ENCODE measurements at regions of chr9 and their contacts with region 1.

Region 1: DNA sequence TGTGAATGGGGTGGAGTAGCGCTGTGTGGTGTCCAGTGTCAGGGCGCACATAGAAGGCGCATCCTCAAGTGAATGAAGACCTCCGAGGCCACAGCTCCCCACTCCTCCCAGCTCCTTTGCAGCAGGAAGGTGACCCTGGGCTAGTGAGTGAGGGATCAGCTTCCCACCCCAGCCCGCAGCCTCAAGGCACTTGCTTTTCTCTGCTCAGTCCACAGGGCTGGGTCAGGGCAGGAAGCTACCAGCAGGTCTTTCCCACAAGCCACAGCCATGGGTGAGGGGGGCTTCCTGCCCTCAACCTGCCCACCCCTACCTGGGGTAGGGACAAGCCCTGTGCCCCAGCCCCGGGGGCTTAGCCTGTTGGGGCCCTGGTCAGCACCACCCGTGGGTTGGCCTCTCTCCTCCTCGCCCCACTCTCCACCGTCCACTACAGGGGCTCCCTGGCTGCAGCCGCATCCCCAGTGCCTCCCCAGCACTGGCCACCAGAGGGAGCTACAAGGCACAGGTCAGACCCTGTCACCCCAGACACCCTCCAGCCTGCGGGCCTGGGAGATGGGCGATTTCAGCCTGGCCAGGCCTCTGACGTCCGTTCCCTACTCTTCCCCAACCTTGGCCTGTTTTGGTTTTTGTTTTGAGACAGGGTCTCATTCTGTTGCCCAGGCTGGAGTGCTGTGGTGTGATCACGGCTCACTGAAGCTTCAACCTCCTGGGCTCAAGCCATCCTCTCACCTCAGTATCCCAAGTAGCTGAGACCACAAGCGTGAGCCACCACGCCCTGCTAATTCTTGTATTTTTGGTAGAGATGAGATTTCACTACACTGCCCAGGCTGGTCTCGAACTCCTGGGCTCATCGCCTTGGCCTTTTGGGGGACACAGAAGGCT is 1.3 kb upstream of the ABCA2 start:
- DNase-seq: peak; percentile 58 to 74 (median 64)
- H3K4me3 ChIP-seq: peak overlapping the region; percentile 65 to 75
- H3K4me3 Mint-ChIP-seq: peak overlapping the region; percentile 87 to 96 (median 90)
- H3K27ac ChIP-seq: peak overlapping the region; percentile 68
- H3K27ac Mint-ChIP-seq: peak overlapping the region; percentile 70 to 92 (median 85)
- H3K4me1 ChIP-seq: peaks cover 80% of the 10 kb centered on the region
- H3K4me1 Mint-ChIP-seq: peaks cover 20 to 58% (median 39%) of the 10 kb centered on the region in 4 donors
- H3K27me3 ChIP-seq: no peaks in the 10 kb centered on the region
- H3K27me3 Mint-ChIP-seq: no peaks in the 10 kb centered on the region

Region 2: DNA sequence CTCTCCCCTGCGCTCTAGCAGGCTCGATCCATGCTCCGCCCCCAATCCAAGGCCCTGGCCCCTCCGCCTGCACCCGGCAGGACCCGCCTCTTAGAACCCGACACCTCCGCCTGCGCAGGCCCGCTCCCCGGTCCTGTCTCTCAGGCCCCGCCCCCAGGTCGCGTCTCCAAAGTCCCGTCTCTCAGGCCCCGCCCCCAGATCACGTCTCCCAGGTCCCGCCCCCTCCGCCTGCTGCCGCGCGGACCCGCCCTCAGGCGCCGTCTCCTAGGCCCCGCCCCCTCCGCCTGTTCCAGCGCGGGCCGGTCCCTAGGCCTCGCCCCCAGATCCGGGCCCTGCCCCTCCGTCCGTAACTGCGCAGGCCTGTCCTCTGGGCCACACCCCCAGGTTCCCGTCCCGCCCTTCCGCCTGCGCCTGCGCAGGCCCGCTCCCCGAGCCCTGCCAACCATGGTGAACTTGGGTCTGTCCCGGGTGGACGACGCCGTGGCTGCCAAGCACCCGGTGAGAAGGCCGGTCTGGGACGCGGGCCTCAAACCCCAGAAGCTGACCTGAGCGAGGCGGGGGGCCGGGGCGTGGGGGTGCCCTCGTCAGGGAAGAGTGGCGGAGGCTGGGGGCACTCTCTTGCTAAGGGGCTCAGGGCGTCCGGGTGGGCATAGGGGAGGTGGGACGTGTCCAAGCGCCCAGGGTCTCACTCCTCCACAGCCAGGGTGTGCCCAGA is 238.2 kb before region 1 on chr9 and contains the start of gene TMEM141:
- CTCF ChIA-PET with region 1: interaction called, 64 read pairs
- POLR2A ChIA-PET with region 1: interaction called, 13 read pairs
- intact Hi-C with region 1: no loop called
- DNase-seq: peak; percentile 99 to 100 (median 99)
- H3K4me3 ChIP-seq: peak within 1 kb of the TSS; percentile 61 to 86
- H3K4me3 Mint-ChIP-seq: peak within 1 kb of the TSS; percentile 81 to 88 (median 85)
- H3K27ac ChIP-seq: peak within 1 kb of the TSS; percentile 93
- H3K27ac Mint-ChIP-seq: peak within 1 kb of the TSS; percentile 91 to 98 (median 95)
- H3K4me1 ChIP-seq: peaks cover 31% of the 10 kb centered on the region
- H3K4me1 Mint-ChIP-seq: peaks cover 8 to 42% (median 24%) of the 10 kb centered on the region in 4 donors
- H3K27me3 ChIP-seq: no peaks in the 10 kb centered on the region
- H3K27me3 Mint-ChIP-seq: no peaks in the 10 kb centered on the region
- total RNA-seq, gene TMEM141: 51.1 to 53.4 TPM

Region 3: DNA sequence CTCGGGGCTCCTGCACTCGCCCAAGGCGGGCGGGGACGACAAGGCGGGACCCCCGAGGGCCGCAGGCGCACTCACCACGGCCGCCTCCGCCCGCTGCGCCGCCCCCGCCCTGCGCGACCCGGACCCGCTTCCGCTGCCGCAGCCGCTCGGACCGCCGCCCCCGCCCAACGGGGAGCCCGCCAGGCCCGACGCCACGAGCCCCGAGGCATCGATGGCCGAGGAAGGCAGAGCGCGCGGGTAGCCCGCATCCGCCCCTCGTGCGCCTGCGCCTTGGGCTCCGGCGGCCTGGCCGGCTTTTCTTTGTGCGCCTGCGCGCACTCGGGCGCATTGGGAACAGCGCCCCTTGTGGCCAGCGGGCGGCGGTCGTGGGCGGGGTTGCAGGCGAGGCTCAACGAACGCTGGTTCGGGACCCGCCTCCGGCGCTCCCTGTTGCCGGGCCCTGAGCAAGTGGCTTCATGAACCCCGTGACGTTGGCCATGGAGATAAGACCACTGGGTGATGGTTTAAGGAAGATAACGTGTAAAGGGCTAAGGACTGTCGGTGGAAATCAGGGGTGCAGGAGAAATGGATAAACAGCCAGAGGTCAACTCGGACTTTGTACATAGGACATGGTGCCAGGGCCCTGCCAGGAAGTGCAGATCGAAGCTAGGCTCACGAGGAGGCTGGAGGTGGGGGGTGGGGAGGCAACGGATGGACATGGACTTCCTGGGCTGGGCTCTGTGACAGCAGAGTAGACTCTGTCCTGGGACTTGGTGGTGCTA is 84.6 kb before region 1 on chr9 and contains the starts of genes C8G and FBXW5:
- CTCF ChIA-PET with region 1: interaction called, 84 read pairs
- POLR2A ChIA-PET with region 1: interaction called, 25 read pairs
- intact Hi-C with region 1: loop called (anchors 1 kb)
- DNase-seq: peak; percentile 89 to 97 (median 96)
- H3K4me3 ChIP-seq: peak within 1 kb of the TSS in 1 of 2 donors; percentile 70
- H3K4me3 Mint-ChIP-seq: peak within 1 kb of the TSS; percentile 75 to 88 (median 85)
- H3K27ac ChIP-seq: peak within 1 kb of the TSS; percentile 59
- H3K27ac Mint-ChIP-seq: peak within 1 kb of the TSS; percentile 66 to 90 (median 81)
- H3K4me1 ChIP-seq: peaks cover 23% of the 10 kb centered on the region
- H3K4me1 Mint-ChIP-seq: peaks cover 3 to 17% (median 9%) of the 10 kb centered on the region in 4 donors
- H3K27me3 ChIP-seq: no peaks in the 10 kb centered on the region
- H3K27me3 Mint-ChIP-seq: no peaks in the 10 kb centered on the region
- total RNA-seq, gene C8G: 2.2 TPM
- total RNA-seq, gene FBXW5: 122 to 123 TPM

Region 4: DNA sequence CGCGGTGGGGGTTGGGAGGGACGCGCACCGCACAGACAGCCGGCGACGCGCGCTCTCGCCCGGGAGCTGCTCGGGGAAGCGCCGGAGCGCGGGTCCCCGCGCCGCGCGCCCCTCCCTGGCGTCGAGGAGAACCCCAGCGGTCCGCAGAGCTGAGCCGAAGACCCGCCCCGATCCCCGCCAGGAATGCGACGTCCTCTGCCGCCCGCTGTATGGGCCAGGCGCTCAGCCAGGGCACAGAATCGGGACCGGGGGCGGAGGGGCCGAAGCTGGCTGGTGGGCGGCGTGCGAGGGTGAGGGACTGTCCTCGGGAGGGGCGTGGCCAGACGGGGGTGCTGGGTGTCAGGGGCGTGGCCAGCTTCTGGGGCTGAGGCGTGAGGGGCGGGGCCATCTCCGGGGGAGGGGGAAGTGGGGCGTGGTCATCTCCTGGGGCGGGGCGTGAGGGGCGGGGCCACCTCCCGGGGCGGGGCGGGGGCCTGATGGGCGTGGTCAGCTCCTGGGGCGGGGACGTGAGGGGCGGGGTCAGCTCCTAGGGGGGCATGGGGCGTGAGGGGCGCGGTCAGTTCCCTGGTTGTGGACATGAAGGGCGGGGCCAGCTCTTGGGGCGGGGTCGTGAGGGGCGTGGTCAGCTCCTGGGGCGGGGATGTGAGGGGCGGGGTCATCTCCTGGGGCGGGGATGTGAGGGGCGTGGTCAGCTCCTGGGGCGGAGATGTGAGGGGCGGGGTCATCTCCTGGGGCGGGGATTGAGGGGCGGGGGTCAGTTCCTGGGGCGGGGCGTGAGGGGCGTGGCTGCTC is 51.0 kb before region 1 on chr9:
- CTCF ChIA-PET with region 1: interaction called, 27 read pairs
- POLR2A ChIA-PET with region 1: interaction called, 7 read pairs
- intact Hi-C with region 1: loop called (anchors 10 kb)
- DNase-seq: peak; percentile 66 to 81 (median 69)
- H3K4me3 ChIP-seq: peak overlapping the region in 1 of 2 donors; percentile 9
- H3K4me3 Mint-ChIP-seq: peak overlapping the region in 5 of 8 donors; percentile 24 to 61 (median 47)
- H3K27ac ChIP-seq: peak overlapping the region; percentile 2
- H3K27ac Mint-ChIP-seq: no peak overlapping the region
- H3K4me1 ChIP-seq: peaks cover 41% of the 10 kb centered on the region
- H3K4me1 Mint-ChIP-seq: peaks cover 11 to 32% (median 23%) of the 10 kb centered on the region in 4 donors
- H3K27me3 ChIP-seq: no peaks in the 10 kb centered on the region
- H3K27me3 Mint-ChIP-seq: no peaks in the 10 kb centered on the region

Region 5: GRCh38 chr9:137046098-137046787 is 16.9 kb after region 1 on chr9 and contains the start of gene NPDC1:
- CTCF ChIA-PET with region 1: interaction called, 32 read pairs
- POLR2A ChIA-PET with region 1: interaction called, 10 read pairs
- intact Hi-C with region 1: no loop called
- DNase-seq: peak; percentile 72 to 79 (median 77)
- H3K4me3 ChIP-seq: peak within 1 kb of the TSS in 1 of 2 donors; percentile 72
- H3K4me3 Mint-ChIP-seq: peak within 1 kb of the TSS; percentile 72 to 88 (median 82)
- H3K27ac ChIP-seq: no peak within 1 kb of the TSS
- H3K27ac Mint-ChIP-seq: peak within 1 kb of the TSS in 3 of 7 donors; percentile 52 to 84 (median 53)
- H3K4me1 ChIP-seq: peaks cover 37% of the 10 kb centered on the region
- H3K4me1 Mint-ChIP-seq: peaks cover 3 to 22% (median 9%) of the 10 kb centered on the region in 4 donors
- H3K27me3 ChIP-seq: peaks cover 32% of the 10 kb centered on the region
- H3K27me3 Mint-ChIP-seq: peaks cover 15 to 19% of the 10 kb centered on the region in 2 donors
- total RNA-seq, gene NPDC1: 20.7 to 21.4 TPM

Region 6: GRCh38 chr9:137064027-137064879 is 35.0 kb after region 1 on chr9:
- CTCF ChIA-PET with region 1: interaction called, 30 read pairs
- POLR2A ChIA-PET with region 1: interaction called, 4 read pairs
- intact Hi-C with region 1: loop called (anchors 1 kb)
- DNase-seq: peak in 3 of 5 donors; percentile 34 to 56 (median 40)
- H3K4me3 ChIP-seq: no peak overlapping the region
- H3K4me3 Mint-ChIP-seq: no peak overlapping the region
- H3K27ac ChIP-seq: no peak overlapping the region
- H3K27ac Mint-ChIP-seq: peak overlapping the region in 2 of 7 donors; percentile 41 to 53
- H3K4me1 ChIP-seq: peaks cover 11% of the 10 kb centered on the region
- H3K4me1 Mint-ChIP-seq: peaks cover 4 to 10% (median 7%) of the 10 kb centered on the region in 4 donors
- H3K27me3 ChIP-seq: no peaks in the 10 kb centered on the region
- H3K27me3 Mint-ChIP-seq: peaks cover 0 to 4% of the 10 kb centered on the region in 2 donors